Upper lobe of right lung (tissue), 1 donor: ENCODE measurements at regions of chr5 and their contacts with region 1.

Region 1: GRCh38 chr5:54243473-54244080 is 66.8 kb downstream of the ARL15 start:
- DNase-seq: no peak
- ATAC-seq: peak; percentile 59
- H3K4me3 ChIP-seq: no peak overlapping the region
- H3K27ac ChIP-seq: no peak overlapping the region
- H3K4me1 ChIP-seq: no peaks in the 10 kb centered on the region
- H3K27me3 ChIP-seq: no peaks in the 10 kb centered on the region
- CTCF ChIP-seq: peak; percentile 71

Region 2: GRCh38 chr5:54401515-54401914 is 157.9 kb after region 1 on chr5:
- intact Hi-C with region 1: no loop called
- DNase-seq: no peak
- ATAC-seq: peak; percentile 45
- H3K4me3 ChIP-seq: no peak overlapping the region
- H3K27ac ChIP-seq: no peak overlapping the region
- H3K4me1 ChIP-seq: peaks cover 2% of the 10 kb centered on the region
- H3K27me3 ChIP-seq: no peaks in the 10 kb centered on the region
- CTCF ChIP-seq: no peak

Region 3: GRCh38 chr5:54421976-54422375 is 178.4 kb after region 1 on chr5:
- intact Hi-C with region 1: loop called (anchors 10 kb)
- DNase-seq: no peak
- ATAC-seq: no peak
- H3K4me3 ChIP-seq: no peak overlapping the region
- H3K27ac ChIP-seq: no peak overlapping the region
- H3K4me1 ChIP-seq: no peaks in the 10 kb centered on the region
- H3K27me3 ChIP-seq: no peaks in the 10 kb centered on the region
- CTCF ChIP-seq: no peak